ENCODE measurements at regions of chr7 and their contacts with region 1.

Region 1: DNA sequence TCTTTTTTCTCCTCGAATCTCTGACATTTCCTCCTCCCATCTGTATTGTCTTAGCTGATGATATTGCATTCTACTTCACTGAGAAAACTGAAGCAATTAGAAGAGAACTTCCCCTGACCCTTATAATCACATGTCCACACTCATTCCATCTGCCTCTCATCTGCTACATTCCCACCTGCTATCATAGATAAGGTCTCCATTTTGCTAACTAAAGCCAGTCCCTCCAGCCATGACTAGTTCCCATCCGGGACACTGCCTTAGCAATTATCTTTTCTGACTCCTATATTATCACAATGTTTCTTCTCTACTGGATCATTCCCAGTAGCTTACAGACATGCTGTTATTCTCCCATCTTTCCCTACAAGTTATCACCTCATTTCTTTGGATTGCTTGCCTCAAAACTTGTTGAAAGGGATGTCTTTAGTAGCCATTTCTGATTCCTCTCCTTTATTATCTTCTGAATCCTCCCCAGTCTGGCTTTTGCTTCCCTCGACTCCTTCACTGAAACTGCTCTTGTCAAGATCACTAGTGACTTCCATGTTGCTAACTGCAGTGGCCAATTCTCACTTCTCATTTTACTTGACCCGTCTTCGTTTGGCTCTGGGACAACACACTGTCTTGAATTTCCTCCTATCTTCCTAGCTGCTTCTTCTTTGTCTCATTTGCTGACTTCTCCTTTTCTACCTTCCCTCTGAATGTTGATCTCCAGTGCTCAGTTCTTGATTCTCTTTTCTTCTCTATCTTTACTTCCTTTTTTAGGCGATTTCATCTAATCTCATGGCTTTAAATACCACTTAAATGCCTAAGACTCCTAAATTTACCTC is 35.9 kb downstream of the FZD1 start:
- DNase-seq: peak in 1 of 2 donors; percentile 9
- ATAC-seq: peak in 7 of 8 donors; percentile 31 to 76 (median 54)
- H3K4me3 ChIP-seq: no peak overlapping the region
- H3K27ac ChIP-seq: peak overlapping the region in 1 of 10 donors; percentile 68
- H3K4me1 ChIP-seq: peaks cover 0 to 22% (median 0%) of the 10 kb centered on the region in 9 donors
- H3K27me3 ChIP-seq: no peaks in the 10 kb centered on the region
- CTCF ChIP-seq: no peak

Region 2: GRCh38 chr7:91411060-91411459 is 110.9 kb after region 1 on chr7:
- intact Hi-C with region 1: loop called in 1 of 10 experiments (anchors 10 kb)
- DNase-seq: no peak
- ATAC-seq: no peak
- H3K4me3 ChIP-seq: no peak overlapping the region
- H3K27ac ChIP-seq: no peak overlapping the region
- H3K4me1 ChIP-seq: peaks cover 0 to 4% (median 0%) of the 10 kb centered on the region in 9 donors
- H3K27me3 ChIP-seq: no peaks in the 10 kb centered on the region
- CTCF ChIP-seq: no peak

Region 3: GRCh38 chr7:91424371-91424770 is 124.2 kb after region 1 on chr7:
- intact Hi-C with region 1: loop called in 2 of 10 experiments (anchors 10 kb)
- DNase-seq: no peak
- ATAC-seq: peak in 1 of 8 donors; percentile 46
- H3K4me3 ChIP-seq: no peak overlapping the region
- H3K27ac ChIP-seq: no peak overlapping the region
- H3K4me1 ChIP-seq: no peaks in the 10 kb centered on the region
- H3K27me3 ChIP-seq: no peaks in the 10 kb centered on the region
- CTCF ChIP-seq: peak in 1 of 9 donors; percentile 7

Measured in heart right ventricle (tissue), 16 donors.